PC-3 (cell line): ENCODE measurements at regions of chr3 and their contacts with region 1.

Region 1: DNA sequence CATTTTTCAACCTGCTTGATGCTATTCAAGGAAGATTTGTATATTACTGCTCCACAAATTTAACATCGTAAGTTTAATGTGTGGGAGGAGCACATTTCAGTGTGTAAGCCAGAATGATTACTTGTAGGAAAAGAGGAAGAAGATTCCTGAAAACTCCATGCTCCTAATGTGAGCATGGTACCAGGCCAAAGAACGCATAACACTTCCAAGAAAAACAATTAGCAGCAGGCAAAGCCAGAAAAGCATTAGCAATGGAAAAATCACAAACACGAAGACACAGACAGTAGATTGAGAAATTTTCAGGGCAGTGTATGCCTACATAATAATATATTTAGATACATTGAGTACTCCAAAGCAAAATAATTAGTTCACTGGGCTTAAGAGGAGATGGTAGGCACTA is 96.6 kb upstream of the CBLB start:
- DNase-seq: no peak
- ATAC-seq: no peak
- H3K4me3 ChIP-seq: no peak overlapping the region
- H3K27ac ChIP-seq: no peak overlapping the region
- H3K4me1 ChIP-seq: peaks cover 38% of the 10 kb centered on the region
- H3K27me3 ChIP-seq: no peaks in the 10 kb centered on the region
- CTCF ChIP-seq: no peak

Region 2: DNA sequence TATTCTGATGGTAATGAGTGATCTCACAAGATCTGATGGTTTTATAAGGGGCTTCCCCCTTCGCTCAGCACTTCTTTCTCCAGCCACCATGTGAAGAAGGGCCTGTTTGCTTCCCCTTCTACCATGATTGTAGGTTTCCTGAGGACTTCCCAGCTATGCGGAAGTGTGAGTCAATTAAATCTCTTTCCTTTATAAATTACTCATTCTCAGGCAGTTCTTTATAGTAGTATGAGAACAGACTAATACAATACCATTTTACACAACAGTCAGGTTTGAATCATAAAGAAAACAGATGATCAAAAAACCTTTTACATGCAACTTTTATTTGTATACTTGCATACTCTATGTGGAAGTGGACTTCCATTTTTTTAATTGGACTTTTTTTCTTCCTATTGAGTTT is 49.9 kb before region 1 on chr3:
- CTCF ChIA-PET with region 1: no interaction called
- POLR2A ChIA-PET with region 1: no interaction called
- intact Hi-C with region 1: loop called (anchors 2 kb)
- DNase-seq: peak; percentile 82
- ATAC-seq: peak; percentile 95
- H3K4me3 ChIP-seq: no peak overlapping the region
- H3K27ac ChIP-seq: peak overlapping the region; percentile 92
- H3K4me1 ChIP-seq: peaks cover 4% of the 10 kb centered on the region
- H3K27me3 ChIP-seq: no peaks in the 10 kb centered on the region
- CTCF ChIP-seq: no peak

Region 3: GRCh38 chr3:105944721-105945120 is 20.7 kb before region 1 on chr3:
- CTCF ChIA-PET with region 1: no interaction called
- POLR2A ChIA-PET with region 1: no interaction called
- intact Hi-C with region 1: loop called (anchors 2 kb)
- DNase-seq: peak; percentile 96
- ATAC-seq: peak; percentile 98
- H3K4me3 ChIP-seq: peak overlapping the region; percentile 7; the same call in 1 of the 2 replicates
- H3K27ac ChIP-seq: peak overlapping the region; percentile 89
- H3K4me1 ChIP-seq: peaks cover 31% of the 10 kb centered on the region
- H3K27me3 ChIP-seq: no peaks in the 10 kb centered on the region
- CTCF ChIP-seq: no peak